Natural killer cell (primary cell): ENCODE measurements at regions of chr3 and their contacts with region 1.

Region 1: GRCh38 chr3:111539351-111540331 is 2.4 kb upstream of the CD96 start:
- DNase-seq: peak; percentile 45 to 84
- ATAC-seq: peak; percentile 46 to 59 (median 50)
- H3K4me3 ChIP-seq: peak overlapping the region; percentile 17
- H3K4me3 Mint-ChIP-seq: peak overlapping the region; percentile 83
- H3K27ac ChIP-seq: peak overlapping the region; percentile 34
- H3K27ac Mint-ChIP-seq: peak overlapping the region in 1 of 2 donors; percentile 70
- H3K4me1 ChIP-seq: peaks cover 26% of the 10 kb centered on the region
- H3K4me1 Mint-ChIP-seq: peaks cover 22 to 26% of the 10 kb centered on the region in 2 donors
- H3K27me3 ChIP-seq: no peaks in the 10 kb centered on the region
- H3K27me3 Mint-ChIP-seq: peaks cover 0 to 3% of the 10 kb centered on the region in 2 donors
- CTCF ChIP-seq: peak; percentile 80

Region 2: DNA sequence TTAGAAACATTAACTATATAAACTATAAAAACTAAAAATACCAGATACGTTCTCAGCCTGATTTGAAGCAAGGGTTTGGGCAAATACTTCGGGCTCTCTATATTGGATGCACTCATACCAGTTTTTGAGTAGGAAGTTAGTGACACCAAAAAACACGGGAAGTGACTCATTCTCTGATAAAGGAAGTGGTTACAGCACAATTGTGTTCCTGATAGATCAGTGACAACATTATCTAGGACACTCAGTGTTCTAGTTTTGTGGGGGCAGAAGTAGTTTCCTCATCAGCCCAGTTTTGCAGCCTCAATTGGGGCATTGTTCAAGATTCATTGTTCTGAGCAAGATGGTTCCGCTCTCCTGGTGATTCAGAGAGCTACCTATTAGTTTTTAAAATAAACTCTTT is 1732.7 kb before region 1 on chr3:
- intact Hi-C with region 1: loop called (anchors 5 kb)
- DNase-seq: peak in 1 of 2 donors; percentile 82
- ATAC-seq: peak; percentile 80 to 93 (median 90)
- H3K4me3 ChIP-seq: no peak overlapping the region
- H3K4me3 Mint-ChIP-seq: peak overlapping the region; percentile 80
- H3K27ac ChIP-seq: peak overlapping the region; percentile 81
- H3K27ac Mint-ChIP-seq: peak overlapping the region; percentile 87 to 90
- H3K4me1 ChIP-seq: peaks cover 27% of the 10 kb centered on the region
- H3K4me1 Mint-ChIP-seq: peaks cover 41 to 55% of the 10 kb centered on the region in 2 donors
- H3K27me3 ChIP-seq: no peaks in the 10 kb centered on the region
- H3K27me3 Mint-ChIP-seq: no peaks in the 10 kb centered on the region
- CTCF ChIP-seq: no peak

Region 3: DNA sequence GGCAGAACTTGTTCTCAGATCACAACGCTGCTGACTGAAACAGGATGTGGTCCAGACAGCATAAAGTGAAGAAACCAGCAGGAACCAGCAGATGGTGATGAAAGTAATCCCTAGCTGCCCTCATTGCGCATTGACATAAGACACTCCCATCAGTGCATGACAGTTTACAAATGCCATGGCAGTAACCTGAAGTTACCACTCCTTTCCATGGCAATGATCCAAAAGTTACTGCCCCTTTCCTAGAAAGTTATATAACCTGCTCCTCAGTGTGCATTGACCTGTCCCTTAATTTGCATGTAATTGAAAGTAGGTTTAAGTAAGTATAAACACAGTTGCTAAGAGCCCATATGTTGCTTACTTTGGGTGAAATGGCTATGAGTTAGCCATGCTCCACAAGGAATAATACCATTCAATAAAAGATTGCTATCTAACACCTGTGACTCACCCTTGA is 146.7 kb before region 1 on chr3:
- intact Hi-C with region 1: loop called (anchors 10 kb)
- DNase-seq: peak; percentile 28 to 83
- ATAC-seq: peak; percentile 98 to 100 (median 98)
- H3K4me3 ChIP-seq: no peak overlapping the region
- H3K4me3 Mint-ChIP-seq: peak overlapping the region; percentile 60
- H3K27ac ChIP-seq: no peak overlapping the region
- H3K27ac Mint-ChIP-seq: peak overlapping the region; percentile 65 to 83
- H3K4me1 ChIP-seq: no peaks in the 10 kb centered on the region
- H3K4me1 Mint-ChIP-seq: peaks cover 16% of the 10 kb centered on the region in 2 donors
- H3K27me3 ChIP-seq: no peaks in the 10 kb centered on the region
- H3K27me3 Mint-ChIP-seq: peaks cover 0 to 3% of the 10 kb centered on the region in 2 donors
- CTCF ChIP-seq: no peak

Region 4: DNA sequence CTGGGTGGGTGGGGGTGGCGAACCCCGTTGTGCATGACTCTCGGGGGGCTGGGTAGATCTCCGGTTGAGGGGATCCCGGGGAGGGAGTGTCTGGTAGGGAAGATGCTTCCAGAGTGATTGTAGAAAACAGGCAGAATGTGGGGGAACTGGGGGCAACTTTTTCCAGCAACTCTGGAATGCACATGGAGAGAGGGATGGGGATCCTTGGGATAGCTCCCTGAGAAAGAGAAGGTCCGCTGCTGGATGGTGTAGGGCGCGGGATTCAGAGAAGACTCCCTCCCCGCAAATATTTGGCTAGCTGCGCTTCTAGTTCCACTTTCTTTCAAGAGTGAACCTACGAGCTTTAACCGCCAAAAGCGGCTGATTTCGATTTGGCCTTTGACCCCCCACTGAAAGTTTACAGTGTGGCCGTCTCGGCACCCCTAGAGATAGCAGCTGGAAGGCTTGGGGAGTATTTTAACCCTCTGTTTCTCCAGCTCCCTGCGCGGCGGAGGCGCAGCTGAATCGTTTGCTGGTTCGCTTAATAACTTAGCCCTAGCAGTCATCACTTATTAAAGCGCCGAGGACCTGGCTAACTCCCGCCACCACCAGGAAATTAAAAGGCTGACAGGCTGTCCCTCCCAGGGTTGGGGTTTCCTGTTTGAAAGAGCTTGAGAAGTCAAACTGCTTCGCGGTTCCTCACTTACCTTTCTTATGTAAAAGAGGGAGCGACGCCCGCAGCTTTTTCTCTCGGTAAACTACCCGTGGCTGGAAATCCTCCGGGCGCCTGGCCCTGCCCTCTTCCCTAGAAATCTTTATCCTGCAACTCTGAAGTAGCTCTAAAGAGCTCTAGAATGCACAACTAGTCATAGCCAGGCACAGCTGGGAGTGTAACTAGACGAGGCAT is 320.6 kb after region 1 on chr3:
- intact Hi-C with region 1: loop called (anchors 5 kb)
- DNase-seq: peak; percentile 61 to 81
- ATAC-seq: peak; percentile 46 to 75 (median 59)
- H3K4me3 ChIP-seq: peak overlapping the region; percentile 96
- H3K4me3 Mint-ChIP-seq: peak overlapping the region; percentile 93
- H3K27ac ChIP-seq: peak overlapping the region; percentile 93
- H3K27ac Mint-ChIP-seq: peak overlapping the region; percentile 93 to 97
- H3K4me1 ChIP-seq: peaks cover 15% of the 10 kb centered on the region
- H3K4me1 Mint-ChIP-seq: peaks cover 53 to 57% of the 10 kb centered on the region in 2 donors
- H3K27me3 ChIP-seq: no peaks in the 10 kb centered on the region
- H3K27me3 Mint-ChIP-seq: peaks cover 0 to 3% of the 10 kb centered on the region in 2 donors
- CTCF ChIP-seq: no peak